Colonic mucosa (tissue), 4 donors: ENCODE measurements at regions of chr18 and their contacts with region 1.

Region 1: DNA sequence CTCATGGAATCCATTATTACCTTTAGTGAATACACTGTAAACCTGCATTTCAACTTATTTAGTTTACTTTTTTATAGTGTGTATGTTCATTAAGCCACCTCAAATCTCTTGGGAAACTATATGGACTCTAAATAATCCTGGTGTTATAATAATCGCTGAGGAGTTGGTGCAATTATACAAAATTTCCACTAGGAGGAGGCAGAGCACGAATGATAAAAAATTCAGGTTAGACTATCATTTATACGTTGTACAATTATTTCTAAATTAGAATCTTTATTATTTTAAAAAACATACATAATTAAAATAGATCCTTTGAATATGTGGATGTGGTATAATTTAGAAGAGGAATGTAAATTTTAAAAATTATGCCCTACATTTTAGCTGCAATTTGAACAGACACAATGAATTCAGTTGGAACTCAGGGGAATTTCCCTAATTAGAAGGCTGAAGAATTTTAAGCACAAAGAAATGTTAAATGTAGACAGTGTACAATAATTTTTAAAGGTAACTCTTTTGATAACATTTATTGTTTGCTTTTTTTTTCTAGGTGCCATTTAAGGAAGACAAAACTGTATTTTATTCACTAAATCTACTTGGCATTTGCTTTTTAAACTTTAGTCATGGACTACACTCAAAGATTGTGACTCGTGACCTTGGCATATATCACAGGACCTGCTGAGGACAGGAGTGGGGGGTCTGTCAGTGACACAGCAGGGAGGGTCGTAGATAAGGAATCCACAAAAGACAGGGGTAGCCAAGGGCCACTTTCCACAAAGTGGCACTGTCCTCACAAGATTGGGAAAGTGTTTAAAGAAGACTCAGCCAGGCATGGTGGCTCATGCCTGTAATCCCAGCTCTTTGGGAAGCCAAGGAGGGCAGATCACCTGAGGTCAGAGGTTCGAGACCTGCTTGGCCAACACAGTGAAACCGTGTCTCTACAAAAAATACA is 45.5 kb downstream of the RAB12 start:
- DNase-seq: no peak
- H3K4me3 ChIP-seq: no peak overlapping the region
- H3K27ac ChIP-seq: no peak overlapping the region
- H3K4me1 ChIP-seq: no peaks in the 10 kb centered on the region
- H3K27me3 ChIP-seq: no peaks in the 10 kb centered on the region
- CTCF ChIP-seq: peak; percentile 65

Region 2: GRCh38 chr18:8696749-8697211 is 42.0 kb after region 1 on chr18:
- intact Hi-C with region 1: loop called (anchors 5 kb)
- DNase-seq: peak; percentile 82
- H3K4me3 ChIP-seq: no peak overlapping the region
- H3K27ac ChIP-seq: no peak overlapping the region
- H3K4me1 ChIP-seq: peaks cover 4% of the 10 kb centered on the region
- H3K27me3 ChIP-seq: peaks cover 4% of the 10 kb centered on the region
- CTCF ChIP-seq: peak; percentile 94

Region 3: DNA sequence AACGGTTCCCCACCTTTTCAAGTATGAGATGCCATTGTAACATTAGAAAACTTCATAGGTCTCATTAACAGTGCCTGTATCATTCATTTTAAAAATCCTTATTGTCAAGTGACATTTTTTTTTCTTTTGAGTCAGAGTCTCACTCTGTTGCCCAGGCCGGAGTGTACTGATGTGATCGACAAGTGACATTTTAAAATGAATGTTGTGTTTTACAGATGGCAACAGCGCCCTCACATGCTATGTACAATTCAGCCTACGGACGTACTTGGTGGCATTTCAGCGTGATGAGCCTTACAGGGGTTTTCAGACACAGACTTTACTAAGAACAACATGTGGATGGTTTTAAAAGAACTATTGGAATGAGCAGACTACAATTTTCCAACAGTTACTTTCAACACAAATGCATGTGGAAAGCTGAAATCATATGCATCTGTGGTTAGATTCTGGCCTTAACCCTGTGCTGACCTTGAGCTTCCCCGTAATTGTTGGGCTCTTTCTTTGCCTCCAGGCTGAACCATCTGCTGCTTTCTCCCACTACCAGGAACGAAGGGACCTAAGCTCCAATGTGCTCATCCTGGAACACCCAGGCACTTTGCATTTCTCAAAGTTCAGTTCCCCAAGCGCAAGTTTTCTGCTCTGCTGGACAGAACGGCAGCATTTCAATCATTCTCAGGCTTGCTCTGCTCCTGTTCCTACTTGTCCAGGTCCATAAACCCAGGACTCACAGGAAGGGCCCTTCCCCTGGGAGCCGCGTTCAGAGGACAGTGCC is 327.8 kb after region 1 on chr18:
- intact Hi-C with region 1: loop called (anchors 2 kb)
- DNase-seq: peak; percentile 48
- H3K4me3 ChIP-seq: no peak overlapping the region
- H3K27ac ChIP-seq: no peak overlapping the region
- H3K4me1 ChIP-seq: no peaks in the 10 kb centered on the region
- H3K27me3 ChIP-seq: no peaks in the 10 kb centered on the region
- CTCF ChIP-seq: peak; percentile 36

Region 4: GRCh38 chr18:9147440-9148202 is 492.8 kb after region 1 on chr18:
- intact Hi-C with region 1: loop called (anchors 10 kb)
- DNase-seq: peak; percentile 43
- H3K4me3 ChIP-seq: no peak overlapping the region
- H3K27ac ChIP-seq: peak overlapping the region; percentile 13
- H3K4me1 ChIP-seq: peaks cover 5% of the 10 kb centered on the region
- H3K27me3 ChIP-seq: no peaks in the 10 kb centered on the region
- CTCF ChIP-seq: peak; percentile 64